Mammary epithelial cell (primary cell): ENCODE measurements at regions of chr1 and their contacts with region 1.

Region 1: GRCh38 chr1:59198564-59198963 is 98.3 kb upstream of the FGGY start:
- DNase-seq: no peak
- H3K4me3 ChIP-seq: no peak overlapping the region
- H3K27ac ChIP-seq: no peak overlapping the region
- H3K4me1 ChIP-seq: no peaks in the 10 kb centered on the region
- H3K27me3 ChIP-seq: no peaks in the 10 kb centered on the region
- CTCF ChIP-seq: no peak

Region 2: GRCh38 chr1:59178339-59179187 is 20.0 kb before region 1 on chr1:
- CTCF ChIA-PET with region 1: no interaction called
- dilution Hi-C with region 1: no loop called
- in situ Hi-C with region 1: no loop called
- intact Hi-C with region 1: no loop called
- DNase-seq: no peak
- H3K4me3 ChIP-seq: no peak overlapping the region
- H3K27ac ChIP-seq: no peak overlapping the region
- H3K4me1 ChIP-seq: no peaks in the 10 kb centered on the region
- H3K27me3 ChIP-seq: no peaks in the 10 kb centered on the region
- CTCF ChIP-seq: no peak

Region 3: GRCh38 chr1:59258412-59259032 is 60.0 kb after region 1 on chr1:
- CTCF ChIA-PET with region 1: no interaction called
- dilution Hi-C with region 1: loop called (anchors 5 kb)
- in situ Hi-C with region 1: no loop called
- intact Hi-C with region 1: no loop called
- DNase-seq: peak; percentile 35
- H3K4me3 ChIP-seq: no peak overlapping the region
- H3K27ac ChIP-seq: no peak overlapping the region
- H3K4me1 ChIP-seq: no peaks in the 10 kb centered on the region
- H3K27me3 ChIP-seq: no peaks in the 10 kb centered on the region
- CTCF ChIP-seq: peak in 1 of 2 donors; percentile 20